Activated CD4-positive, alpha-beta T cell treated with anti-CD3 and anti-CD28 coated beads, Interleukin-2, amount 10 ng/mL, durations not matched to agents 24 days and 14 days (primary cell): ENCODE measurements at regions of chr11 and their contacts with region 1.

Region 1: GRCh38 chr11:33742249-33742851 is 6.1 kb upstream of the CD59 start:
- DNase-seq: no peak
- H3K4me3 Mint-ChIP-seq: no peak overlapping the region
- H3K27ac Mint-ChIP-seq: no peak overlapping the region
- H3K4me1 Mint-ChIP-seq: no peaks in the 10 kb centered on the region
- H3K27me3 Mint-ChIP-seq: peaks cover 3% of the 10 kb centered on the region

Region 2: DNA sequence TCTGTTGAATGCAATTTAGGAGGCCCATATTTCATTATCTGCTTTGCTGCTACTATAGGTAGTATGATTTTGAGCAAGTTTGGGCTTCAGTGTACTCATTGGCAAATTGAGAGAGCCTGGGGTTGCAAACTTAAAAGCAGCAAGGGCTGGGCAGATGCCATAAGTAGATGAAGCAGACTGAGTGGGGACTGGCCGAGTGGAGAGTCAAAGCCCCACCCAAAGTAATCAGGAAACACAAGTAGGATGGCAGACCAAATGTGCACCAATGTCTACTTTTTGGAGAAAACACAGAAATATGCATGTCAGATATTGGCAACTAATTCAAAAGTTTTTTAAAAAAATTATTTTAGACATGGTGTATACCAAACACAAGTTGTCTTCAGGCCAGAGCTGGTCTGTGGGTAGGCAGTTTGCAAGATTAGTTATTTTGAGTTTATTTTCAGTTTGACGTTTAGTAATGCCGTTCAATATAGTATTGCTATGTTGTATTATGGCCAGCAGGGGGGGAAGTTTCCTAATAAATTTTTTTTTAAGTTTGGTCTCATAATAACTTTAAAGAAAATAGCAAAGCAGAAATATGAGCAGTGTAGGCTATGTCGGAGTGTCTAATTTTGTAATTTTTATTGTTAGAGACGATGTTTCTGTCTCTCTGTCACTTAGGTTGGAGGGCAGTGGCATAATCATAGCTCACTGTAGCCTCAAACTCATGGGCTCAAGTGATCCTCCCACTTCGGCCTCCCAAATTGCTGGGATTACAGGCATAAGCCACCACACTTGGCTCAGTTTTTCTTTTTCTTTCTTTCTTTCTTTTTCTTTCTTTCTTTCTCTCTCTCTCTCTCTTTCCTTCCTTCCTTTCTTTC is 380.1 kb before region 1 on chr11:
- intact Hi-C with region 1: loop called (anchors 2 kb)
- DNase-seq: no peak
- H3K4me3 Mint-ChIP-seq: no peak overlapping the region
- H3K27ac Mint-ChIP-seq: no peak overlapping the region
- H3K4me1 Mint-ChIP-seq: no peaks in the 10 kb centered on the region
- H3K27me3 Mint-ChIP-seq: peaks cover 23% of the 10 kb centered on the region

Region 3: GRCh38 chr11:33542921-33543320 is 199.4 kb before region 1 on chr11:
- intact Hi-C with region 1: loop called (anchors 2 kb)
- DNase-seq: peak; percentile 73
- H3K4me3 Mint-ChIP-seq: no peak overlapping the region
- H3K27ac Mint-ChIP-seq: no peak overlapping the region
- H3K4me1 Mint-ChIP-seq: peaks cover 4% of the 10 kb centered on the region
- H3K27me3 Mint-ChIP-seq: peaks cover 20% of the 10 kb centered on the region

Region 4: DNA sequence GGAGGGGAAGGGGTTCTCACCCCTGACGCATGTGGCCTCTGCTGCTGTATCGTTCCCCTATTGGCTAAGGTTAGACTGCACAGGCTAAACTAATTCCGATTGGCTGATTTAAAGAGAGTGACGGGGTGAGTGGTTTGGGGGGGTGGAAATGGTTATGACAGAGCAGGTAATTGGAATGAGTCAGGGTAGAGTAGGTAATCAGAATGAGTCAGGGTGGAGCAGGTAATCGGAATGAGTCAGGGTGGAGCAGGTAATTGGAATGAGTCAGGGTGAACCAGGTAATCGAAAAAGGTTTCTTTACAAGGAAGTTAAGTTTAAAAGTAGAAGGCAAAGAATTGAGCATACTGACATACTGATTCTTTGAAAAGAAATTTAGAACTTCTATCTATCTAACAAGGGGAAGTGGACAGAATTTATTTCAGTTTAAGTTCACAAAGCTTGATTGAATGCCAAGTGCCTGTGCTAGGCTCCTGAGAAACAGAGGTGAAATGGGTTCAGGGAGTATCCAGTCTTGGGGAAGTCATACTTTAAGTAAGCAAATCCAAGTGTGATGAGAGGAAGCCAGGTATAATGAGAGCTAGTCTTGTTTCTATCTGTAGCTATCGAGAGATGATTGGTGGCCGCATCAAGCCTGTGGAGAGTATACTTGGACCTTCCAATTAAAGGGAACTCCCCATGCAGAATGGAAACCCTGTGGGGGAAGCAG is 99.7 kb before region 1 on chr11:
- intact Hi-C with region 1: no loop called
- DNase-seq: no peak
- H3K4me3 Mint-ChIP-seq: no peak overlapping the region
- H3K27ac Mint-ChIP-seq: no peak overlapping the region
- H3K4me1 Mint-ChIP-seq: no peaks in the 10 kb centered on the region
- H3K27me3 Mint-ChIP-seq: peaks cover 8% of the 10 kb centered on the region

Region 5: DNA sequence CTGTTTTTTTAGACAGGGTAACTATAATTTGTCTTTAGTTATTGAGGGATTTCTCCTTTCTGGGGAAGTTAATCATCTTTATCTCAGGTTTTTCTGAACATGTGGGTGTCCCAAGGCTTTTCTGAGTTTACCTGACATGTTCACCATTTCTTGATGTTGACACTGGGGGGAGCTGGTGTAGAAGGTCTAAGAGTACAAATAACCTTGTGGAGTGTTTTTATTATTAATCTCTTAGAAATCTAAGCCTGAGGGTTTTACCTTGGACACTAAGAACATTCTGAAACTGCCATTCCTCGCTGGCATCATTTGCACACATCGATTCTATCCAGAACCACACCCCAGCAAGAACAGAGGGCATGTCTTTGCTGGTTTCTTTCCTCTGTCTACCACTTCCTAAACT is 26.1 kb before region 1 on chr11:
- intact Hi-C with region 1: loop called (anchors 1 kb)
- DNase-seq: no peak
- H3K4me3 Mint-ChIP-seq: no peak overlapping the region
- H3K27ac Mint-ChIP-seq: no peak overlapping the region
- H3K4me1 Mint-ChIP-seq: peaks cover 6% of the 10 kb centered on the region
- H3K27me3 Mint-ChIP-seq: no peaks in the 10 kb centered on the region

Region 6: DNA sequence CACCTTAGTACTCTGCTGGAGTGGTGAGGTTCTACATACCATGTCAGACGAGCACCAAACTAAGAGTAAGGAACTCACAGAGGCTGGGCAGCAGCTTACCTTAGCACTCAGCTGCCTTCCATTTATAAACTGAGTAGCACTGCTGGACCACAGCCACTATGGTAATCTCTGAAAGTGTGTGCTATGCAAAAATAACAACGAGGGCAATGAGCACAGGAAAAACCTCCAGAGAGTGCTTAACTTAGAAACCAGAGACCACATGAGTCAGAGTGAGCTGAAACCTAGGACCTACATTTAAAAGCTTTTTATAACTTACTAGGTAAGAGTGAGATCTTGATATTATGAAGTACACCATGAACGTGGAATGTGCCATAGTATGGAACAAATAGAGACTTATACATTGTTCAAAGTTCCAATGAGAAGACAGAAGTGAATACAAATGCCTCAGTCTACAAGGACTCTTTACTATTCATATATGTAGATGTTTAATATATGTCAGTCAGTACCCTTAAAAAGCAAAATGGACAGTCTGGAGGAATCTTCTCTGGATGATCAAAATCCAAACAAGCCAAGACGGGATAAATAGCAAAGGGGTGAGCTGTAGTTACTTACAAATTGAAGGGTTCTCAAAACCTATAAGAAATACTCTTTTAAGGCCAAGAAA is 11.1 kb after region 1 on chr11:
- intact Hi-C with region 1: no loop called
- DNase-seq: no peak
- H3K4me3 Mint-ChIP-seq: no peak overlapping the region
- H3K27ac Mint-ChIP-seq: no peak overlapping the region
- H3K4me1 Mint-ChIP-seq: peaks cover 7% of the 10 kb centered on the region
- H3K27me3 Mint-ChIP-seq: no peaks in the 10 kb centered on the region

Region 7: DNA sequence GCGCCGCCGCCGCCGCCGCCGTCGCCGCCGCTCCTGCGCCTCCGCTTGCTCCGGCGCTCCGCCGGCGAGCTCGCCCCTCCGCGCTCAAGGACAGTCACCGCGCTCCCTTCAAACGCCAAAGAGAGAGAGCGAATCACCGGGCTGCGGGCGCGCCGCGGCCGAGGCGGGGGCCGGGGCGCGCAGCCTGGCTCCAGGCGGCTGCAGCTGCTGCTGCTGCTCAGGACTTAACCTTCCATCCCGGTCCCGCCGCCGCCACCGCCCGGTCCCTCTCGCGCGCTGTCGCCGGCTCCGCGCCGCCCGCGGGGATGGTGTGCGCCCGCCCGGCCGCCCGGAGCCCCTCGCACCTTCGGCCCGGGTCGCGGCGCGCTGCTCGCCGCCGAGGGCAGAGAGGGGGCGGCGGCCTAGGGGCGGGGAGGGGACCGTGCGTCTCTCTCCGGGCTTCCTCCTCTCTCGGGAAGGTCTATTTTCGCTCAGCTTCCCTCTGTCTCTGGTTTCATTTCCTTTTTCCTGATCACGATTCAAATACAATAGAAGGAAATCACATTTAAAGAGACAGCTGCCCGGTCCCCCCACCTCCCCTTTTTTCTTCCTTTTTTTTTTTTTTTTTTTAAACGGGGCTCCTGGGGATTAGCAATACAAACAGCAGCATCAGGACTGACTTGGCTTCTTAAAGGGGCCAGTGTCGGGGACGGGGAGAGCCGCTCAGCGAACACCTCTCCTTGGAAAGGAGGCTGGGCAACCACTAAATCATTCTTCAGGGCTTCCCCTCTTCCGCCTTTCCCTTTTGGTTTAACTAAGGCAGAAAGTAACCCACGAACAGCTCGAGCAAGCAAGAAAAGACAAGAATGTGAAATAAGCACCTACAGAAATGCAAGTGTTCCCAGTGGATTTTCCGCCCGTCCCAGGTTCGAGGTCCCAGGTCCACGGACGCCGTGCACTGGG is 127.4 kb after region 1 on chr11:
- intact Hi-C with region 1: no loop called
- DNase-seq: peak; percentile 62
- H3K4me3 Mint-ChIP-seq: peak overlapping the region; percentile 84
- H3K27ac Mint-ChIP-seq: no peak overlapping the region
- H3K4me1 Mint-ChIP-seq: peaks cover 4% of the 10 kb centered on the region
- H3K27me3 Mint-ChIP-seq: peaks cover 73% of the 10 kb centered on the region